BJ (cell line): ENCODE measurements at regions of chr10 and their contacts with region 1.

Region 1: GRCh38 chr10:95363303-95363912 is 72.6 kb upstream of the PDLIM1 start:
- DNase-seq: no peak
- H3K4me3 ChIP-seq: no peak overlapping the region
- H3K27me3 ChIP-seq: no peaks in the 10 kb centered on the region
- CTCF ChIP-seq: peak; percentile 80

Region 2: DNA sequence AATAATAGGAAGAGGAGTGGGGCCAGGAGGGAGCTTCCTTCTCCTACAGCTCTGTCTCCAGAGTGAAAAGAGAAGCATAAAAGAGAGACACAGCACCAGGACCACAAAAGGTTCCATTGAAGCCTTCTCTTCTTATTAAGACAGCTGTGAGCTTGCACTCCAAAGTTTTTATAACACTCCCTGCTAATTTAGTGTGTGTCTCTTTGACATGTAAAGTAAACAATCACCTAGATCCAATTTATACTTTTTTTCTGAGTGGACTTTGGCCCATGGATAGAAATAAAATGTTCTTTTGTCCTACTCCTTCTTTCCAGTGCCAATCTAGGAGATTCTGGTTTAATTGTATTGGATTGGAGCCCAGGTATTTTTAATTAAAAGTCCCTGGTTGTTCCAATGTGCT is 294.1 kb before region 1 on chr10 and contains the start of gene CYP2C8:
- CTCF ChIA-PET with region 1: no interaction called
- POLR2A ChIA-PET with region 1: no interaction called
- DNase-seq: no peak
- H3K4me3 ChIP-seq: no peak within 1 kb of the TSS
- H3K27me3 ChIP-seq: no peaks in the 10 kb centered on the region
- CTCF ChIP-seq: no peak
- polyA plus RNA-seq, gene CYP2C8: 0.04 TPM in 1 of 2 replicates, not detected in the other

Region 3: DNA sequence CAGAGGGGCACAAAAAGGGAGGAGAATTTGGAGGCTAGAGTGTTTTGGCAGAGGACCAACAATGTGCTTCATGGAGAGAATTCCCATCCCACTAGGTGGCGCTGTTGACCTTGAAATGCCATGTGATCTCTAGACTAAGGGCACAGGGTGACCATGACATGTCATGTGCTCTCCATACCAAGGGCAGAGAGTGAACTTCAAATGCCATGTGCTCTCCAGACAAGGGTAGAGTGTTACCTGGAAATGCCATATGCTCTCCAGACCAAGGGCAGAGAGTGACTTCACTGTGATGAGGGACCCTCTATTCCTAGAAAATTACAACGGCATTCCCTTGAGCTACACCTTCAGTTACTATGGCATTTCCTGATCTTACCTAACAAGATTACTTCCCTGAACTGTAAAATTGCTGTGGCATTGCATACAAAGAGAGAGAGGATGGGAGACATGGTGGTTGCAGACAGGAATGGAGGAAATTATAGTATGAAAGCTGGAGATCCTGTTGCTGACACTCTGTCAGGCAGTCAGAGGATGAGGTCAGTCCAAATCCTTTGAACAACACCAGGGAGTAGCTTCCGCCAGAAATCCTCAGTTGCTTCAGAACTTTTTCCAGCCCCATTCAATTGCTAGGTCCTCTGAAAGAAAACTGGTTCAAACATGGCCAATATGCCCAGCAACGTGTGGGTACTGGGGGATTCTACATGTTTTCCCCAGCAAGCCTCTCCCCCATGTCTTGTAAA is 230.2 kb before region 1 on chr10:
- CTCF ChIA-PET with region 1: interaction called, 15 read pairs
- POLR2A ChIA-PET with region 1: no interaction called
- DNase-seq: peak; percentile 9
- H3K4me3 ChIP-seq: no peak overlapping the region
- H3K27me3 ChIP-seq: 0 out of 2 replicates have a peak, but pooled peaks cover 2% of the 10 kb centered on the region
- CTCF ChIP-seq: peak; percentile 76

Region 4: GRCh38 chr10:95201736-95202135 is 161.7 kb before region 1 on chr10:
- CTCF ChIA-PET with region 1: interaction called, 36 read pairs
- POLR2A ChIA-PET with region 1: no interaction called
- DNase-seq: no peak
- H3K4me3 ChIP-seq: no peak overlapping the region
- H3K27me3 ChIP-seq: no peaks in the 10 kb centered on the region
- CTCF ChIP-seq: peak; percentile 46

Region 5: DNA sequence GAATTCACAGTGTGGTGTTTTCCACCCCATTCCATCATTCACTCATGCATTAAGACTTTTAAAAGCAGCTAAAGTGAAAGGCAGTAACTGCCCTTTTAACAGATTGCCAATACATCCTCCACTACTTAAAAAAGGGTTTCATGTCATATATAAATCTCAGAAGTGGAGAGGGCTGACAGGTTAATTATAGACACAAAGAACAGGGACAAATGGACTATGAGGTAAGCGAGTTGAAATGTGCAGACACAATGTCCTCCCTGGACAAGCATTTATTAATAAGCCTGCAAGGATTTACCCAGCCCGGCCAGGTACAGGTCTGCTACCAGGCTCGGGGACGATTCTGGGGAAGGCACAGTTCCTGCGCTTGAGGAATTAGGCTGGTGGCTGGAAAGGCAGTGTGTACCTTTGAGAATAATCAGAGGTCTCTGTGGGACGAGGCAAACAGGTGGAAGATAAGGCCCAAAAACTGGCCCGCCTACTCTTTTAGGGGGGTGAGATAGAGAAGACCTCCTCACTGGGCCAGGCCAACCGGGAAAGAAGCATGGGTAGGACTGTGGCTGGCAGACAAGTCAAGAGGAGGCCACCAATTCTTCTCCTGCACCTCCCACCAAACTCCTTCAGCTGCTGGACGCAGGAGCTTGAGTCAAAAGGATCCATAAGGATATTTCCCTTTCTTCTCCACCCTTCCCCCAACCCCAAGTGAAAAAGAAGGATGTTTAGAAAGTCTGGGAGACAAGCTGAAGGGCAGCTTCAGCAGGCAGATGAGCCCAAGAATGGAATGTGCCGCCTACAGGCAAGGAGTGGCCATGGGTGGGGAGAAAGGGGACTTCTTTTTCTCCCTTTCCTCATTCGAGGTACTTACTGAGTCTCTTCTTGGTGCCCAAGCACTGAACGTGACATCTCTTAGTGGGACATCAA is 74.1 kb before region 1 on chr10:
- CTCF ChIA-PET with region 1: interaction called, 11 read pairs
- POLR2A ChIA-PET with region 1: no interaction called
- DNase-seq: no peak
- H3K4me3 ChIP-seq: peak overlapping the region; percentile 95
- H3K27me3 ChIP-seq: no peaks in the 10 kb centered on the region
- CTCF ChIP-seq: peak; percentile 35; the same call in 1 of the 2 replicates

Region 6: GRCh38 chr10:95374597-95375209 is 11.3 kb after region 1 on chr10:
- CTCF ChIA-PET with region 1: interaction called, 60 read pairs
- POLR2A ChIA-PET with region 1: no interaction called
- DNase-seq: no peak
- H3K4me3 ChIP-seq: no peak overlapping the region
- H3K27me3 ChIP-seq: peaks cover 5% of the 10 kb centered on the region
- CTCF ChIP-seq: peak; percentile 85

Region 7: GRCh38 chr10:95628786-95629185 is 265.4 kb after region 1 on chr10:
- CTCF ChIA-PET with region 1: no interaction called
- POLR2A ChIA-PET with region 1: no interaction called
- DNase-seq: no peak
- H3K4me3 ChIP-seq: no peak overlapping the region
- H3K27me3 ChIP-seq: no peaks in the 10 kb centered on the region
- CTCF ChIP-seq: no peak

Region 8: DNA sequence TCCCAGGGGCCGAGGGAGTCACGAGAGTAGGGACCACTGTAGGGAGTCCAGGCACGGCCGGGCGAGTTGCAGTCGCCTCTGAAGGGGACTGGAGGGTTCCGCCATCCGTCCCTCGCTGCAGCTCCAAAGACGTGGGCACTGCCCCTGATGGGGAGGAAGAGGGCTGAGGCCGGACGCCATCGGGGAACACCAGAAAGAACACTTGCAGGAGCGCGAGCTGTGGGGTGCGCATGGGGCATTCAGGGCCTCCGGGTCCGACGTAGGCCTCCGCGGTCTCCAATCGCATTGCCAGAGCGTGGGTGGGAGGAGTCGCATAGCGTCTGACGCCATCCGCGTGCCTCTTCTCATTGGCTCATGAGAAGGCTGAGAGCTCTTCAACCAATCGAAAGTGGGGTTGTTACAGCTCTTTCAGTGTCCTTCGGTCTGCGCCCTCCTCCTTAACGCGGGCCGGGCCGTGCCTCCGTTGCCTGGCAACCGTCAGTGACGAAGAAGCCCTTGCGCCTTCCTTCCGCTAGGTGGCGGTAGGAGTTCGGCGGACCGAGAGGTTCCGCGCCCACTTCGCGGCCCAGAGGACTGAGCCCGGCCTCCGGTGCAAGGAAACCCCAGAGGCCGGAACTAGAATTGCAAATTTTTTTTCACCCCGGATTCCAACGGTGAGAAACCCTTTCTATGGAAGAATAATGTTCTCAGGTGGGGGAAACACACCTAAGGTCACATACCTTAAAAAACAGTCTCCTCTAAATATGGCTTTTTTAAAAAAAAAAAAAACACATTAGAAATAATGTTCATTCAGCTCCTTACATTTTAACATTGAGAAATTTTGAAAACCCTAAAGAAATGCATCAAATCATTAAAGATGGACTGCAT is 330.5 kb after region 1 on chr10 and contains the start of gene TCTN3:
- CTCF ChIA-PET with region 1: no interaction called
- POLR2A ChIA-PET with region 1: no interaction called
- DNase-seq: peak; percentile 98
- H3K4me3 ChIP-seq: peak within 1 kb of the TSS; percentile 83
- H3K27me3 ChIP-seq: no peaks in the 10 kb centered on the region
- CTCF ChIP-seq: peak; percentile 100
- polyA plus RNA-seq, gene TCTN3: 38.0 and 48.6 TPM in 2 replicates